Naive thymus-derived CD4-positive, alpha-beta T cell (primary cell): ENCODE measurements at regions of chr7 and their contacts with region 1.

Region 1: DNA sequence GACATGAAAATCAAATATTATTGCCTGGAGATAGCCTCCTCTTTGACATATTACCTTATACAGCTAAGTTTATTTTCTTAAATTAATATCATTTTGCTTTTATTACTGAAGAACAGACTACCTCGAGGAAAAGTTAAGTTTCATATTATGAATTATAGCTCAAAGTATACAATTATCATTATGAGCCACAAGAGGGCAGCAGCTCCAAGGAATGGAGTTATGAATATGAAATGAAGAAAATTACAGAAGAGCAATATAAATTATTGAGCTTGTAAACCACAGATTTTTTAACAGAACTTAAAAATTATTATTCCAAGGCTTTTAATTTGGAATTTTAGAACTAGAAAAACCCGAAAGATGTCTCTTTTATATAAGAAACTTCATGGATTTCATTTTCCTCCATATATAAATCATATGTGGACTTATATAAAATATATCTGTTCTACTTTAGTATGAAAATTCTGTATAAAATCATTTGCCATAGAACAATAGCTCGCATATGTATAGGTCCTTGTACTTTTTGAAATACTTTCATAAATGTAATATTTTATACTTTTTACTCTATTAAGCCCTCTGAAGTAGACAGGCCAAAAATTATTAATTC is 40.1 kb downstream of the IQUB start:
- DNase-seq: peak in 6 of 9 donors; percentile 2 to 46 (median 36)
- ATAC-seq: peak; percentile 67
- H3K4me3 ChIP-seq: no peak overlapping the region
- H3K4me3 Mint-ChIP-seq: no peak overlapping the region
- H3K27ac ChIP-seq: no peak overlapping the region
- H3K27ac Mint-ChIP-seq: no peak overlapping the region
- H3K4me1 ChIP-seq: no peaks in the 10 kb centered on the region
- H3K4me1 Mint-ChIP-seq: no peaks in the 10 kb centered on the region
- H3K27me3 ChIP-seq: no peaks in the 10 kb centered on the region
- H3K27me3 Mint-ChIP-seq: peaks cover 10 to 41% (median 30%) of the 10 kb centered on the region in 5 donors

Region 2: DNA sequence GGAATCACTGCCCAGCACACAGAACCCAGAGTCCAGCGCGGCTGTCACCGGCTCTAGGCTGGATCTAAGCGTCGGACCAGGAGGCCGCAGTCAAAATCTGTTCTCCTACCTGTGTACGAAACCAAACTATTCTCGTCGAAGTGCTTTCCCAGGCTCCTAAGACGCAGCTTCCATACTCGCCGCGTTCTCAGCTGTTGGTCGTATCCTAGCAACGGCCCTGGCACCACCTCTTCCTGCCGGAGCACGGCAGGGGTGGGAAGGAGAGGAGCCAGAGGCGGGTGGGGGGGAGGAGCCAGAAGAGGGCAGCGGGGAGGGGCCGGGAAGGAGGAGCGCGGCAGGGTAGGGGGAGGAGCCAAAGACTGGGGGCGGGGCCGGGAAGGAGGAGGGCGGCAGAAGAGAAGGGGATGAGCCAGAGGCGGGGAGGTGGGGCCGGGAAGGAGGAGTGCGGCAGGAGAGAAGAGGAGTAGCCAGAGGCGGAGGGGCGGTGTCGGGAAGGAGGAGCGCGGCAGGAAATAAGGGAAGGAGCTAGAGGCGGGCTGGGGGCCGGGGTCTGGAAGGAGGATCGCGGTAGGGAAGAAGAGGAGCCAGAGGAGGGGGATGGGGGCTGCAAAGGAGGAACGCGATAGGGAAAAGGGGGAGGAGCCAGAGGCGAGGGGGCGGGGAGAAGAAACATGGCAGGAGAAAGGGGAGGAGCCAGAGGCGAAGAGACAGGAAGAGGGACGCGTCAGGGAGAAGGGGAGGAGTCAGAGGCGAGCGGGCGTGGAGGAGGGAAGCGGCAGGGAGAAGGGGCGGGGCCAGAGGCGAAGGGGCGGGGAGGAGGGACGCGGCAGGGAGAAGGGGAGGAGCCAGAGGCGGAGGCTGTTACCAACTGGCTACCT is 40.3 kb after region 1 on chr7 and contains the start of gene IQUB:
- CTCF ChIA-PET with region 1: interaction called, 11 read pairs
- POLR2A ChIA-PET with region 1: no interaction called
- intact Hi-C with region 1: loop called (anchors 1 kb)
- DNase-seq: peak; percentile 82 to 94 (median 88)
- ATAC-seq: peak; percentile 95
- H3K4me3 ChIP-seq: peak within 1 kb of the TSS; percentile 54
- H3K4me3 Mint-ChIP-seq: peak within 1 kb of the TSS; percentile 87 to 97 (median 91)
- H3K27ac ChIP-seq: peak within 1 kb of the TSS; percentile 73
- H3K27ac Mint-ChIP-seq: peak within 1 kb of the TSS; percentile 74 to 96 (median 86)
- H3K4me1 ChIP-seq: peaks cover 4 to 14% of the 10 kb centered on the region in 2 donors
- H3K4me1 Mint-ChIP-seq: peaks cover 7 to 31% (median 27%) of the 10 kb centered on the region in 7 donors
- H3K27me3 ChIP-seq: no peaks in the 10 kb centered on the region
- H3K27me3 Mint-ChIP-seq: peaks cover 14 to 32% (median 23%) of the 10 kb centered on the region in 5 donors
- total RNA-seq, gene IQUB: 0.24 TPM in 1 of 5 experiments, not detected in the others

Region 3: GRCh38 chr7:123624527-123625183 is 130.4 kb after region 1 on chr7:
- CTCF ChIA-PET with region 1: interaction called, 4 read pairs
- POLR2A ChIA-PET with region 1: no interaction called
- intact Hi-C with region 1: loop called in 1 of 2 experiments (anchors 2 kb)
- DNase-seq: peak in 8 of 9 donors; percentile 19 to 54 (median 30)
- ATAC-seq: peak; percentile 57
- H3K4me3 ChIP-seq: no peak overlapping the region
- H3K4me3 Mint-ChIP-seq: no peak overlapping the region
- H3K27ac ChIP-seq: no peak overlapping the region
- H3K27ac Mint-ChIP-seq: no peak overlapping the region
- H3K4me1 ChIP-seq: no peaks in the 10 kb centered on the region
- H3K4me1 Mint-ChIP-seq: peaks cover 0 to 5% (median 0%) of the 10 kb centered on the region in 7 donors
- H3K27me3 ChIP-seq: no peaks in the 10 kb centered on the region
- H3K27me3 Mint-ChIP-seq: peaks cover 0 to 11% (median 8%) of the 10 kb centered on the region in 5 donors

Region 4: DNA sequence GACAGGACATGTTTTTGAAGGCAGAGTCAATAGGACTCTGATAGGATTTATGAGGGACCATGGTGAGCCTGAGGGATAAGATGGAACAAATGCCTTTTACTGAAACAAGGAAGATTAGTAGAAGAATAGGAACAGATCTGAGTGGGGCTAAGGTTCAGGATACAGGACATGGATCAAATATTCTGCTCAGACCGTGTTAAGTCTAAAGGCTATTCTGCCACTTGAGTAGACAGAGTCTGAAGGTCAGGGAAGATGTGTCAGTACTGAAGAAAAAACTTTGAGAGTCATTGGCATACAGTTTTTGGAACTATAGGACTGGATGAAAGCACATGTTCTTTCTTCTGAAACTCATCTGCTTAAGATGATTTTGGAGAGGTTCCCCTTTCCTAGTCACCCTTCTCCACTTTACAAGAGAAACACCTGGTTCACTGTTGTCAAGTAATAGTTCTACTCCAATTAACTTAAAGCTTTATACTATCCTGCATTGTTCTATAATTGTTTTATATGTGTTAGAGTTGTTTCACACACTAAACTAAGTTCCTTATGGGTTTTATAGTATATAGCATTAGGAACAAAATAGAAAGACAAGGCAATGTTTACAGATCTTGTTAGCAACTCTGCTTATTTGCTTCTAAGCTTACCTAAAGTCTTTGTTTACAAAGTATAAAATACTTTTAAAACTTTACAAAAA is 211.1 kb after region 1 on chr7:
- CTCF ChIA-PET with region 1: interaction called, 4 read pairs
- POLR2A ChIA-PET with region 1: no interaction called
- intact Hi-C with region 1: loop called in 1 of 2 experiments (anchors 1 kb)
- DNase-seq: no peak
- ATAC-seq: no peak
- H3K4me3 ChIP-seq: no peak overlapping the region
- H3K4me3 Mint-ChIP-seq: no peak overlapping the region
- H3K27ac ChIP-seq: no peak overlapping the region
- H3K27ac Mint-ChIP-seq: peak overlapping the region in 6 of 9 donors; percentile 0 to 60 (median 18)
- H3K4me1 ChIP-seq: no peaks in the 10 kb centered on the region
- H3K4me1 Mint-ChIP-seq: peaks cover 0 to 8% (median 1%) of the 10 kb centered on the region in 7 donors
- H3K27me3 ChIP-seq: no peaks in the 10 kb centered on the region
- H3K27me3 Mint-ChIP-seq: no peaks in the 10 kb centered on the region

Region 5: DNA sequence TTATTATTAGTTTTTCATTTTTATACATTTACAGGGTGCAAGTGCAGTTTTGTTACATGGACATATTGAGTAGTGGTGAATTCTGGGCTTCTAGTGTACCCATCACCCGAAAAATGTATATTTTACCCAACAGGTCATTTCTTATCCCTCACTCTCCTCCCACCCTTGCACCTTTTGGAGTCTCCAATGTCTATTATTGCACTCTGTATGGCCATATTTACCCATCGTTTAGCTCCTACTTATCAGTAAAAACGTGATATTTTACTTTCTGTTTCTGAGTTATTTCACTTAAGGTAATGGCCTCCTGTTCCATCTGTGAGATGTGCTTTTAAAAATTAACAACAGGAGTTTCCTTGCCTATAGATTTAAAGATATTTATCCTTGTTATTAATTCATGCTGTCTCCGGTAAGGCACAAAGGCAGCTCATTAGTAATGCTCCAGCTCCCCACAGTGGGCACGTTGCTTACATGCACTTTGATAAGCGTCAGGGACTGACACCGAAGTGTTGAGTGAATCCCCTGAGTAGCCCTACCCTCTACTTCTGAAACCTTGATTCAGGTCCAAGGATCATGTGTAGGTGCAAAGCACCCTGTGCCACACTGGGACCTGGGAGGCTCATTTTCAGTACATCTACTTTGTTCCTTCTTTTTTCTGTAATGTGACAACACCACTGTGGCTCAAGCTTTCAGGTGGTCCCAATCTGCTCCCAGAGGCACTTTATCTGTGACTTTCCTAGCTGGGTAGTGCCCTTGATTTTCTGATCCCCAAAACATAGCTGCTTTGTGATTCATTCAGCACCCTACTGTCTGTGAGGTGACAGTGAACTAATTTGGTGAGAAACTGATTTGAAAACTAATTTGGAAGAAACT is 377.9 kb after region 1 on chr7:
- CTCF ChIA-PET with region 1: interaction called, 12 read pairs
- POLR2A ChIA-PET with region 1: no interaction called
- intact Hi-C with region 1: loop called (anchors 1 to 2 kb)
- DNase-seq: peak in 5 of 9 donors; percentile 3 to 26 (median 16)
- ATAC-seq: peak; percentile 63
- H3K4me3 ChIP-seq: no peak overlapping the region
- H3K4me3 Mint-ChIP-seq: no peak overlapping the region
- H3K27ac ChIP-seq: no peak overlapping the region
- H3K27ac Mint-ChIP-seq: no peak overlapping the region
- H3K4me1 ChIP-seq: no peaks in the 10 kb centered on the region
- H3K4me1 Mint-ChIP-seq: peaks cover 0 to 6% (median 0%) of the 10 kb centered on the region in 7 donors
- H3K27me3 ChIP-seq: no peaks in the 10 kb centered on the region
- H3K27me3 Mint-ChIP-seq: peaks cover 5 to 28% (median 10%) of the 10 kb centered on the region in 5 donors